ENCODE measurements at regions of chr10 and their contacts with region 1.

Region 1: DNA sequence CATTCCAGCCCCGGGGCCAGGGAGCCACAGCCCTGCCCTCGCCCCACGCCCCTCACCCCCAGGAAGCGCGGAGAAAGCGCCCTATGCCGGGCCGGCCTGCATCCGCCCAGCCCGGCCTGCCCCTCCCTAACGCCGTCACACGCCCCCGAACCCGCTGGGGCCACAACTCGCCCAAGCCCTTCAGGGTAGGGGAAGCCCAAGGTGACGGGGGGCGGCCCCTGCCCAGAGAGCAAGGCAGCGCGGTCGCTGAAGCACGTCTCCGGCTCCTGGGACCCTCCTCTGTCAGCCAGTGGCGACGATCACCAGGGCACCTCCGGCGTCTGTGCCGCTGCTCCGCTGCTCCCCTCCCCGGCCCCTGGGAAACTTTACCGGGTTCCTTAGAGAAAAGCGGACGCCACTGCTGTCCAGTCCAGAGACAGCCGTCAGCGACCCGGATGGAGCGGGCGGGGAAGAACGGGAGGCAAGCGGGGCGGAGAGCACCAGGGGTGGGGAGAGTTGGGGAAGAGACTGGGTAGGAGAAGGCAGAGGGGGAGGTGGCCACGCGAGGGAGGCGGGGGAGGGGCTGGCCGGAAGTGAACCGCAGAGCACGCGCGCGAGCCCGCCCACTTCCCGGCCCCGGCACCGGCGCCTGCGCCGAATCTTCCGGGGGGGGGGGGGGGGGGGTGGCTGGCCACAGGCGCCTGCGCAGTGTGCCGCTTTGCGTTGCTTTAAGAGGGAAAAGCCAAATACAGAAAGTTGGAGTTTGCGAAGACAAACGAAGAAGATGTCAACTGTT is at the start of gene HERC4:
- DNase-seq: peak; percentile 84 to 97 (median 90)
- ATAC-seq: peak; percentile 92
- H3K4me3 ChIP-seq: peak within 1 kb of the TSS; percentile 88
- H3K4me3 Mint-ChIP-seq: peak within 1 kb of the TSS; percentile 93
- H3K27ac ChIP-seq: peak within 1 kb of the TSS; percentile 94
- H3K27ac Mint-ChIP-seq: peak within 1 kb of the TSS; percentile 89
- H3K4me1 ChIP-seq: peaks cover 6% of the 10 kb centered on the region
- H3K4me1 Mint-ChIP-seq: peaks cover 47% of the 10 kb centered on the region
- H3K27me3 ChIP-seq: no peaks in the 10 kb centered on the region
- H3K27me3 Mint-ChIP-seq: no peaks in the 10 kb centered on the region
- CTCF ChIP-seq: no peak
- total RNA-seq, gene HERC4: 46.0 to 46.8 TPM

Region 2: GRCh38 chr10:67849331-67850011 is 225.5 kb before region 1 on chr10:
- CTCF ChIA-PET with region 1: no interaction called
- POLR2A ChIA-PET with region 1: interaction called, 3 read pairs
- intact Hi-C with region 1: loop called (anchors 2 to 10 kb)
- DNase-seq: peak; percentile 87 to 96 (median 93)
- ATAC-seq: peak; percentile 99
- H3K4me3 ChIP-seq: peak overlapping the region; percentile 91
- H3K4me3 Mint-ChIP-seq: peak overlapping the region; percentile 94
- H3K27ac ChIP-seq: peak overlapping the region; percentile 78 to 93
- H3K27ac Mint-ChIP-seq: peak overlapping the region; percentile 91
- H3K4me1 ChIP-seq: peaks cover 12% of the 10 kb centered on the region
- H3K4me1 Mint-ChIP-seq: peaks cover 9% of the 10 kb centered on the region
- H3K27me3 ChIP-seq: no peaks in the 10 kb centered on the region
- H3K27me3 Mint-ChIP-seq: no peaks in the 10 kb centered on the region
- CTCF ChIP-seq: no peak

Region 3: DNA sequence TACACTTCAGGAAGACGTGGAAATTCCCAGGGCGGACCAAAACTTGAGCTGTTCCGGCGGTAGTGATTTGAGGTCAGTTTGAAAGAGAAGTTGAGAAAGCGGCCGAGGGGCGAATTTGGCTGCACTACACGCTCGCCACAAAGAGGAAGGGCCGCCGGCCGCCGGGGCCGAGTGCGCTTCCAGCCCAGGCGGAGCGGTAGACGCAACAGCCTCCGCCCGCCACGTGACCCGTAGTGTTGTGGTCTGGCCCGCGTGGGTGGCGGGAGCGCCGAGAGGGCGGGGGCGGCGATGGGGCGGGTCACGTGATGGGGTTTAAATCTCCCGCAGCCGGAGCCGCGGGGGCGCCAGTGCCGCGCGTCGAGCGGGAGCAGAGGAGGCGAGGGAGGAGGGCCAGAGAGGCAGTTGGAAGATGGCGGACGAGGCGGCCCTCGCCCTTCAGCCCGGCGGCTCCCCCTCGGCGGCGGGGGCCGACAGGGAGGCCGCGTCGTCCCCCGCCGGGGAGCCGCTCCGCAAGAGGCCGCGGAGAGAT is 190.6 kb before region 1 on chr10 and contains the start of gene SIRT1:
- CTCF ChIA-PET with region 1: no interaction called
- POLR2A ChIA-PET with region 1: interaction called, 23 read pairs
- intact Hi-C with region 1: loop called (anchors 2 to 10 kb)
- DNase-seq: peak; percentile 88 to 97 (median 92)
- ATAC-seq: peak; percentile 70
- H3K4me3 ChIP-seq: peak within 1 kb of the TSS; percentile 87
- H3K4me3 Mint-ChIP-seq: peak within 1 kb of the TSS; percentile 95
- H3K27ac ChIP-seq: peak within 1 kb of the TSS; percentile 78 to 82
- H3K27ac Mint-ChIP-seq: peak within 1 kb of the TSS; percentile 91
- H3K4me1 ChIP-seq: peaks cover 24% of the 10 kb centered on the region
- H3K4me1 Mint-ChIP-seq: peaks cover 46% of the 10 kb centered on the region
- H3K27me3 ChIP-seq: no peaks in the 10 kb centered on the region
- H3K27me3 Mint-ChIP-seq: no peaks in the 10 kb centered on the region
- CTCF ChIP-seq: no peak
- total RNA-seq, gene SIRT1: 57.6 to 62.9 TPM

Region 4: DNA sequence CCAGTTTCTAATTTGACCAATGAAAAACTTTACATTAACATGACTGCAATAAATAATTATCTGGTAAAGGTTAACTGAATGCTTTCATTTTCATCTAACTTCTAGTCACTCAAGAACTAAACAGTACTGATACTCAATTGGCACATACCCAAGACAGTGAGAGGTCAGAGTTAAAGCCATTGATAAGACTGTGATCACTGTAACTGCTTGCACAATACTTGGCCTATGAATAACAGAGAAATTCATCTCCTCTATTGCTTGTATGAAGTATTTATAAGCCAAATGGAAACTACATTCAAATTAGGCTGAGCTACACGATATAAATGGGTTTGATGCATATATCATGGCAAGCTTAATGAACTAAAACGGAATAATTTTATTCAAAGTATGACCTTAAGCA is 42.8 kb before region 1 on chr10:
- CTCF ChIA-PET with region 1: no interaction called
- POLR2A ChIA-PET with region 1: no interaction called
- intact Hi-C with region 1: loop called in 1 of 2 experiments (anchors 5 kb)
- DNase-seq: no peak
- ATAC-seq: no peak
- H3K4me3 ChIP-seq: no peak overlapping the region
- H3K4me3 Mint-ChIP-seq: no peak overlapping the region
- H3K27ac ChIP-seq: no peak overlapping the region
- H3K27ac Mint-ChIP-seq: no peak overlapping the region
- H3K4me1 ChIP-seq: no peaks in the 10 kb centered on the region
- H3K4me1 Mint-ChIP-seq: peaks cover 7% of the 10 kb centered on the region
- H3K27me3 ChIP-seq: no peaks in the 10 kb centered on the region
- H3K27me3 Mint-ChIP-seq: no peaks in the 10 kb centered on the region
- CTCF ChIP-seq: no peak

Region 5: DNA sequence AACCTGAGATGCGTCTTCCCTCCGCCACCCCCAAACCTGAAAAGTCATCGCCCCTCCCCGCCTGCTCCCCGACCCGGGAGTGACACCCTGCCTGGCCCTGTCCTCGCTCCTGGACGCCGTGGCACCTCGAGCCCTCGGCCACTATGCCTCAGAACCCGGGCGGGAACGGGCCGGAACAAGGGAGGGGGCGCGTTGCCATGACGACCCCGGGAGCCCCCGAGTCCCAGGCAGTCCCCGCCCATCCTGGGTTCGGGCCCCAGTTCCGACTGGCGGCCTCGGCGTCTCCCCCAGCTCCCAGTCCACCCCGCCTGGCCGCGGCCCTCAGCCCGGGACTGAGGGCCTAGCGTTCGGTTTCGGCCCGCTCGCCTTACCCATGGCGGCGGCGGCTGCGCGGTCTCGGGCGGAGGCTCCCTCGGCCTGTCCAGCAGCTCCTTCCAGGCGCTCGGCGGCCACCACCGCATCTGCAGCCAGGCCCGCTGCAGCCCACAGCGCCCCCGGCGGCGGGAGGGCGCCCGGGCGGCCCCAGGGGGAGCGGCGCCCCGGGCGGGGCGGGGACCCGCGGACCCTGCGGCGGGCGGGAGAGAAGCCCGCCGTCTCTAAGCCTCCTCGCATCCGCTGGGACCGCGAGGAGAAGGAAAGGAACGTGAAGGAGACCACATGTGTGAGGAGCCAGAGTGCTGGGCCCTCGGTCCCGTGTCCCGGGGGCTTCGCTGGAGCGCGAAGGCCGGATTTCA is 332.0 kb after region 1 on chr10 and contains the start of gene RUFY2:
- CTCF ChIA-PET with region 1: no interaction called
- POLR2A ChIA-PET with region 1: no interaction called
- intact Hi-C with region 1: loop called in 1 of 2 experiments (anchors 2 kb)
- DNase-seq: peak; percentile 42 to 88 (median 70)
- ATAC-seq: peak; percentile 94
- H3K4me3 ChIP-seq: peak within 1 kb of the TSS; percentile 99
- H3K4me3 Mint-ChIP-seq: peak within 1 kb of the TSS; percentile 89
- H3K27ac ChIP-seq: peak within 1 kb of the TSS in 1 of 2 donors; percentile 35
- H3K27ac Mint-ChIP-seq: peak within 1 kb of the TSS; percentile 53
- H3K4me1 ChIP-seq: peaks cover 11% of the 10 kb centered on the region
- H3K4me1 Mint-ChIP-seq: peaks cover 18% of the 10 kb centered on the region
- H3K27me3 ChIP-seq: no peaks in the 10 kb centered on the region
- H3K27me3 Mint-ChIP-seq: no peaks in the 10 kb centered on the region
- CTCF ChIP-seq: peak; percentile 57
- total RNA-seq, gene RUFY2: 10.7 to 14.8 TPM

Region 6: DNA sequence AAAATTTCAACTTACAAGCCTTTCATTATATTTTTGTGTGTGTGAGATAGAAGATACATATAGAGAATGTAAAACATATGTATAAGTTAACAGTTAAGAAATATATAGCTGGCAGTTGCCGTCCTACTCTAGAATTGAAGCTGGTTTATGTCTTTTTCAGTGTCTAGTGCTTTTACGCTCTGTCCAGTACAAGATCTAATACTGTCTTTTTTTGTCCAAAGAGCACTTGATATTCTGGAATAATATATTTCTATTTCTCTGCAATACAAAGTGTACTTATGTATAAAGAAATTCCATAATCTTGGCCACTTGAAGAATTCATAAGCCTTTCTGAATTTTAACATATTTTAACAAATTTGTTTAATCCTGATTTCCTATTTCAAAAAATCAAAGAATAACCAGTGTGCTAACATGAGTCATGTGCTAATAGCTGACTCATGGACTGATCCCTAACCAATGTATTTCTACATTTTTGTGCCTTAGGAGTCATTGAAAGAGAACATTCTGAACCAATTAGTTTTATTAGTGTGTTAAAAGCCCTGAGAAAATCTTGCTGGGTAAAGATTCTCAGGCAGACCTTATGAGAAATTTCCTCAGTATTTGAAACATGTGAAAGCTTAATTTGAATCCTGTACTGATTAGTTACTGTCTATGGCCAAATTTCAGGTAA is 572.8 kb after region 1 on chr10:
- CTCF ChIA-PET with region 1: no interaction called
- POLR2A ChIA-PET with region 1: no interaction called
- intact Hi-C with region 1: no loop called
- DNase-seq: no peak
- ATAC-seq: no peak
- H3K4me3 ChIP-seq: no peak overlapping the region
- H3K4me3 Mint-ChIP-seq: no peak overlapping the region
- H3K27ac ChIP-seq: no peak overlapping the region
- H3K27ac Mint-ChIP-seq: no peak overlapping the region
- H3K4me1 ChIP-seq: no peaks in the 10 kb centered on the region
- H3K4me1 Mint-ChIP-seq: no peaks in the 10 kb centered on the region
- H3K27me3 ChIP-seq: no peaks in the 10 kb centered on the region
- H3K27me3 Mint-ChIP-seq: no peaks in the 10 kb centered on the region
- CTCF ChIP-seq: no peak

Region 7: GRCh38 chr10:68720793-68721672 is 646.1 kb after region 1 on chr10 and contains the start of gene CCAR1:
- CTCF ChIA-PET with region 1: no interaction called
- POLR2A ChIA-PET with region 1: no interaction called
- intact Hi-C with region 1: loop called in 1 of 2 experiments (anchors 5 kb)
- DNase-seq: peak; percentile 92 to 99 (median 96)
- ATAC-seq: peak; percentile 94
- H3K4me3 ChIP-seq: peak within 1 kb of the TSS; percentile 93
- H3K4me3 Mint-ChIP-seq: peak within 1 kb of the TSS; percentile 100
- H3K27ac ChIP-seq: peak within 1 kb of the TSS; percentile 85 to 89
- H3K27ac Mint-ChIP-seq: peak within 1 kb of the TSS; percentile 98
- H3K4me1 ChIP-seq: peaks cover 16% of the 10 kb centered on the region
- H3K4me1 Mint-ChIP-seq: peaks cover 16% of the 10 kb centered on the region
- H3K27me3 ChIP-seq: no peaks in the 10 kb centered on the region
- H3K27me3 Mint-ChIP-seq: no peaks in the 10 kb centered on the region
- CTCF ChIP-seq: no peak
- total RNA-seq, gene CCAR1: 68.9 to 82.2 TPM

Measured in CD4-positive, alpha-beta T cell (primary cell).